Calu3 (cell line): ENCODE measurements at regions of chr7 and their contacts with region 1.

Region 1: GRCh38 chr7:33423646-33424020 is 294.3 kb downstream of the BBS9 start:
- DNase-seq: peak; percentile 55
- H3K4me3 Mint-ChIP-seq: no peak overlapping the region
- H3K27ac Mint-ChIP-seq: no peak overlapping the region
- H3K4me1 Mint-ChIP-seq: no peaks in the 10 kb centered on the region
- H3K27me3 Mint-ChIP-seq: peaks cover under 1% of the 10 kb centered on the region
- CTCF ChIP-seq: peak; percentile 71

Region 2: GRCh38 chr7:33744293-33745075 is 320.9 kb after region 1 on chr7:
- CTCF ChIA-PET with region 1: no interaction called
- intact Hi-C with region 1: loop called (anchors 10 kb)
- DNase-seq: no peak
- H3K4me3 Mint-ChIP-seq: no peak overlapping the region
- H3K27ac Mint-ChIP-seq: no peak overlapping the region
- H3K4me1 Mint-ChIP-seq: no peaks in the 10 kb centered on the region
- H3K27me3 Mint-ChIP-seq: peaks cover 29% of the 10 kb centered on the region
- CTCF ChIP-seq: peak; percentile 19